ENCODE measurements at regions of chr3 and their contacts with region 1.

Region 1: GRCh38 chr3:112074721-112075497 is 11.3 kb upstream of the C3orf52 start:
- DNase-seq: peak; percentile 46
- H3K4me3 Mint-ChIP-seq: peak overlapping the region; percentile 50
- H3K27ac Mint-ChIP-seq: peak overlapping the region; percentile 74
- H3K4me1 Mint-ChIP-seq: peaks cover 46% of the 10 kb centered on the region
- H3K27me3 Mint-ChIP-seq: no peaks in the 10 kb centered on the region

Region 2: DNA sequence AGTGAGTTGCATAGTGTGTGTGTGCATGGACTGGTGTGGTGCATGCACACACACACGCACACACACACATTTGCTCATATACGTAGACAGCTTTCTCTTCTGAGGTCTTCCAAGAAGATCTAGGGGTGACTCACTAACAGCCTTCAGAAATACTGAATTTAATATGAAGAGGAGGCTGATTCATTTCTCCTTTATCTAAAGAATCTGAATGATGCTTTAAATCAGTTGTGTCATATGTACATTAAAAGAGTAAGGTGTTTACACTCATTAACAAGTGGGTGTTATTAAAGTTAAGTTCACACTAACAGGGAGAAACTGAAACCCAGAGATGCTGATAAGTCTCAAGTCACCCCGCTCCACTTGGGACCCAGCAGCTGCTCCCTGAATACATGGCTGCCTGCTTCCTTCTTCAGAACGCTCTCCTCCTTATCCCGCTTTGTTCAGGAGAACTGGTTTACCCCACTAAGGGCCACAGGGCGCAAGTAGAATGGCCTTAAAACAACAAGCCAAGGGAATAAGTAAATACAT is 18.4 kb before region 1 on chr3:
- intact Hi-C with region 1: loop called (anchors 1 kb)
- DNase-seq: no peak
- H3K4me3 Mint-ChIP-seq: peak overlapping the region; percentile 0
- H3K27ac Mint-ChIP-seq: peak overlapping the region; percentile 15
- H3K4me1 Mint-ChIP-seq: peaks cover 31% of the 10 kb centered on the region
- H3K27me3 Mint-ChIP-seq: peaks cover 3% of the 10 kb centered on the region

Region 3: DNA sequence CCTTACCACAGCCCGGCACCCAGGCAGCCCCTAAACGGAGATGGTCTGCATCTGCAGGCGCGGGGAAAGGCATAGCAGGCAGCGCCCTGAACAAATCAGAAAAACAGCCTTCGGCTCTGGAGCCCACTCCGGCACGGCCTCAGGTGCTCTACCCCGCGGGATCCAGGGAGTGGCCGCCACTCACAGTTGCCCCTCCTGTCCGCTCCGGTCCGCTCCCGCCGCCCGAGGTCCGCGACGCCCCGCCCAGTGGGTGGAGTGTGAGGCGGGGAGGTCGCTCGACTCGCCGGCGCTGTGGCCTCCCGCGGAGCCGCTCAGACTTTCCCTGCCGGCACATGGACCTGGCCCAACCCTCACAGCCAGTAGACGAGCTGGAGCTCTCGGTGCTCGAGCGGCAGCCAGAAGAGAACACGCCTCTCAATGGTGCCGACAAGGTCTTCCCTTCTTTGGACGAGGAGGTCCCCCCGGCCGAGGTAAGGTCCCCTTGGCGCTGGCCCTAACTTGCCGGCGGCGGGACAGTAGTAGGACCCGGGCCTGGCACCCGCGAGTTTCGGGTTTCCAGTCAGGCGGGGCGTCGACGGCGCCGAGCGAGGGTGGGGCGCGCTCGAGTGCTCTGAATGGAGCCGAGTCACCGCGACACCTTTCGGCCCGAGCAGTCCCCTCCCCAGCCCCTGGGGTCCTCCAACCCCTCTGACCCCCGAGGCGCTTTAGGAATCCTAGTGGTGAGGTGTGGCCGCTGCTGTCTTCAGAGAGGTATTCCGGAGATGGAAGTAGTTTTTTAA is 11.4 kb after region 1 on chr3 and contains the start of gene C3orf52:
- intact Hi-C with region 1: loop called (anchors 1 kb)
- DNase-seq: peak; percentile 67
- H3K4me3 Mint-ChIP-seq: peak within 1 kb of the TSS; percentile 85
- H3K27ac Mint-ChIP-seq: peak within 1 kb of the TSS; percentile 81
- H3K4me1 Mint-ChIP-seq: peaks cover 44% of the 10 kb centered on the region
- H3K27me3 Mint-ChIP-seq: peaks cover 2% of the 10 kb centered on the region
- total RNA-seq, gene C3orf52: 11.7 and 13.3 TPM in 2 replicates

Measured in activated T-helper 2 cell treated with anti-CD3 and anti-CD28 coated beads, Interferon-gamma antibody, Interleukin-2, Interleukin-4, amounts not matched to agents 10 μg/mL and 5 μg/mL and 100 μg/mL, durations not matched to agents 14 hours and 24 hours and 36 hours (primary cell).